ENCODE measurements at regions of chr11 and their contacts with region 1.

Region 1: DNA sequence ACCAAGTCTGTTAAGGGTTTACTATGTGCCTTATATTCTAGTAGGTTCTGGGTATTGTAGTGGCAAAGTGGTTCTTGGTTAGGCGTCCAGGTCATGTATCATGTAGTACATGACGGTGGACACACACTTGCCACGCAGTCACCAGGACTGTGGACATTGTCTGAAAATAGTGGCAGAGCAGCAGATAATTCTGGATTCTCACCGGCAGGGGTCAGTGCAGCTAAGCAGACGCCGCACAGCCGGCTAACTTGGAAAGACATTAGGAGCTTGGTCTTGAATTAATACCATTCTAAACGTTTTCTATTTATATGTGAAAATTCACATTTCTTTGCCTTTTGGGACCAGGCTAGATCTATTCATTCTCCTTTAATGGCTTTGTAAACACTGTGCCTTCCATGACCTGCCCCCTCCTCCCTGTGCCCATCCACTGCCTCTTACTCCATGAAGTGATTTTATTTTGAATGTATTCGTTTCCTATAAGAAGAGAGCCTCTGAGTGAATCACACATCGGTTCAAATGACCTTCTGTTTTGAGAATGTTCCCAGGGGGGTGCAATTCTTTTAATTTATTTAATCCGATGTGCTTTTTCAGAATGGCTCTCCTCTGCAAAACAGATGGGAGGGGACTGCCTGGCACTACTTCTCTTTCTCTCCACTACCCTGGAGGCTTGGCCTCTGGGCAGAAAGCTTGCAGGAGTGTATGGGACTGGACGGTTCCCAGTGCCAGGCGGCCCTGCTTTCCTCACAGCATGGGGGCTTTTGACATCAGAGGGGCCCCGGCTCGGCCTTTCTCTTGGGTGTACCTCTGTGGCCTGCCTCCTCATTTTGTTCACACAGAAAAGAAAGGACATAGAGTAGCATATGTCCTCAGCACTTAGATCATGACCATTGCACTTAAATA is 378.0 kb downstream of the NTM start:
- DNase-seq: no peak
- H3K4me3 ChIP-seq: no peak overlapping the region; the same call in 1 of the 2 replicates
- CTCF ChIP-seq: peak; percentile 80

Region 2: DNA sequence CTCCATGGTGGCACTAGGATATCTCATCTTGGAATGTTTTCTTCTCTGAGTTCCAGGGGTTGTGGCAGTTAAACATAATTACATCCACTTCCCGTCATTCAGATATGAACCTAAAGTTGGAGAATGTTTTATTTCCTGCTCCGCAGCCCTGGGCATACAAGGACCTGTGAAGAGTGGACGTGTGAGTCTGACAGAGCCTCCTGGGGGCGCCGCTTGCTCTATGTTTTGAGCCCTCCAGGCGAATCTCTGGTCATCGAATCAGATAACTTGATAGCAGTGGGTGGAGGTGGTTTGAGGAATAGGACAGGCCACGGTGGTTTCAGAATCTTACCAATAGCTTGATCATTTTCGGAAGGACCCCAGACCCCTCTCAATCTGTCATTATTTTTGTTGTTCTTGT is 203.8 kb before region 1 on chr11:
- CTCF ChIA-PET with region 1: no interaction called
- POLR2A ChIA-PET with region 1: no interaction called
- DNase-seq: no peak
- H3K4me3 ChIP-seq: no peak overlapping the region
- CTCF ChIP-seq: no peak

Region 3: DNA sequence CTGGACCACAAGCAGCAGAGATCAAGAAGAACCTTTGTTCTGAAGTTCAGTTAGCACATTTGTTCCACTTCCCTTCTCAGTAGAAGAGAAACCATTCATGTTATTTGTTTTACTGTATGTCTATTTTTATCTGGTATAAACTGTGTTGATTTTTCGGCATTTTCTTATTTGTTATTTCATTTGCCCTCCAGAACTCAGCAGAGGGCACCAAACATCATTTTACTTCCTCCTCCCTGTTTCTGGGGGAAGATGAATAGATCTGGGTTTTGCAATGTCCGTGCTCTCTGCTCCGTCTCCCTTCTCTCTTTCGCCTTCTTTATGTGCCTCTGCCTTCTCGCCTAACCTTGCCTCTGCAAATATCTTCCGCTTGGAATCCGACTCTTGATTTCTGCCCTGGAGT is 11.0 kb before region 1 on chr11:
- CTCF ChIA-PET with region 1: interaction called, 49 read pairs
- POLR2A ChIA-PET with region 1: no interaction called
- DNase-seq: no peak
- H3K4me3 ChIP-seq: no peak overlapping the region
- CTCF ChIP-seq: no peak

Region 4: GRCh38 chr11:131770801-131771200 is 22.4 kb after region 1 on chr11:
- CTCF ChIA-PET with region 1: interaction called, 61 read pairs
- POLR2A ChIA-PET with region 1: interaction called, 5 read pairs
- DNase-seq: no peak
- H3K4me3 ChIP-seq: no peak overlapping the region
- CTCF ChIP-seq: no peak

Region 5: GRCh38 chr11:131859538-131860210 is 111.3 kb after region 1 on chr11:
- CTCF ChIA-PET with region 1: interaction called, 14 read pairs
- POLR2A ChIA-PET with region 1: no interaction called
- DNase-seq: no peak
- H3K4me3 ChIP-seq: no peak overlapping the region
- CTCF ChIP-seq: no peak

Region 6: GRCh38 chr11:131889146-131889577 is 140.8 kb after region 1 on chr11:
- CTCF ChIA-PET with region 1: interaction called, 17 read pairs
- POLR2A ChIA-PET with region 1: interaction called, 3 read pairs
- DNase-seq: peak; percentile 80
- H3K4me3 ChIP-seq: no peak overlapping the region
- CTCF ChIP-seq: no peak

Region 7: DNA sequence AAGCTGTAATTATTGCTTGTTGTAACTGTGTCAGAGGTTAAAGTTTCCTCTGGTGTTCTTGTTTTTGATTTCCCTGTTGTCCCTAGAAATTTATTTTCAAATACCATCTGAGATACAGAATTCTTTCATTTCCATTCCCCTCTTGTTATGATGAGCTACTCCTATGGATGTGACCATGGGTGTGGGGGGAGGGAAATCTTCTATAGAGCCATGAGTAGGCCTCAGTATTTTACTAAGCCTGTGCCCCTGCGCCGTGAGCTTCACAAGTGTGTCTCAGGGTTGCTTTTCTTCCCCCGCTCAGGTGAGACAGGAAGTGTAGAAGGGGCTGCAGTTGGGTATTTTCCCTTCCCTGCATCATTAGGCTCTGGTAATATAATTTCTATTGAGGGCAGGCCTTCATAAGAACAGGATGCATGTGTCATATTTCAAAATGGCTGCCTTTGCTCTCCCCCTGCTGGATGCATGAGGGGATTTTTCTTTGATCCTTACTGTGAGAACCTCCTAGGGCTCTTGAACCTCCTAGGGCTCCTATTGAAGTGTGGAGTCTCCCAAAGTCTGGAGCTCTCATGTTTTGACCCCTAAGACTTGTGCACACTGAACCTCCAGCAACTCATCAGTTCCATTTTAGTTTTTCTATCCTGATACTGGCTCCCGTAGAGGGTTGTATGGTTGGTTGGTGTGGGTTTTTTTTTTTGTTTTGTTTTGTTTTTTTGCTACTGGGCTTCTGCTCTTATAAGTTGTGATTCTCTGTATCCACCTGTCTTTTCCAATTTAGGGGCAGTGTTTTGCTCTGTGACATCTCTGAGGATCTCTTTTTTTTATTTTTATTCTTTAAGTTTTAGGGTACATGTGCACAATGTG is 280.2 kb after region 1 on chr11:
- CTCF ChIA-PET with region 1: interaction called, 10 read pairs
- POLR2A ChIA-PET with region 1: no interaction called
- DNase-seq: no peak
- H3K4me3 ChIP-seq: no peak overlapping the region
- CTCF ChIP-seq: peak; percentile 61

Measured in AG04449 (cell line).